CD4-positive, alpha-beta T cell (primary cell): ENCODE measurements at regions of chr2 and their contacts with region 1.

Region 1: GRCh38 chr2:176001916-176002687 is at the start of gene LNPK:
- DNase-seq: peak; percentile 83 to 95 (median 90)
- ATAC-seq: peak; percentile 90
- H3K4me3 ChIP-seq: peak within 1 kb of the TSS; percentile 81
- H3K4me3 Mint-ChIP-seq: peak within 1 kb of the TSS; percentile 88
- H3K27ac ChIP-seq: peak within 1 kb of the TSS; percentile 64 to 69
- H3K27ac Mint-ChIP-seq: peak within 1 kb of the TSS; percentile 84
- H3K4me1 ChIP-seq: peaks cover 16% of the 10 kb centered on the region
- H3K4me1 Mint-ChIP-seq: peaks cover 24% of the 10 kb centered on the region
- H3K27me3 ChIP-seq: no peaks in the 10 kb centered on the region
- H3K27me3 Mint-ChIP-seq: no peaks in the 10 kb centered on the region
- CTCF ChIP-seq: no peak
- total RNA-seq, gene LNPK: 12.7 to 15.8 TPM

Region 2: GRCh38 chr2:174240097-174240496 is 1762.0 kb before region 1 on chr2:
- CTCF ChIA-PET with region 1: no interaction called
- POLR2A ChIA-PET with region 1: no interaction called
- intact Hi-C with region 1: loop called in 1 of 2 experiments (anchors 5 kb)
- DNase-seq: no peak
- ATAC-seq: no peak
- H3K4me3 ChIP-seq: no peak overlapping the region
- H3K4me3 Mint-ChIP-seq: no peak overlapping the region
- H3K27ac ChIP-seq: no peak overlapping the region
- H3K27ac Mint-ChIP-seq: no peak overlapping the region
- H3K4me1 ChIP-seq: peaks cover 3% of the 10 kb centered on the region
- H3K4me1 Mint-ChIP-seq: peaks cover 65% of the 10 kb centered on the region
- H3K27me3 ChIP-seq: no peaks in the 10 kb centered on the region
- H3K27me3 Mint-ChIP-seq: no peaks in the 10 kb centered on the region
- CTCF ChIP-seq: no peak

Region 3: DNA sequence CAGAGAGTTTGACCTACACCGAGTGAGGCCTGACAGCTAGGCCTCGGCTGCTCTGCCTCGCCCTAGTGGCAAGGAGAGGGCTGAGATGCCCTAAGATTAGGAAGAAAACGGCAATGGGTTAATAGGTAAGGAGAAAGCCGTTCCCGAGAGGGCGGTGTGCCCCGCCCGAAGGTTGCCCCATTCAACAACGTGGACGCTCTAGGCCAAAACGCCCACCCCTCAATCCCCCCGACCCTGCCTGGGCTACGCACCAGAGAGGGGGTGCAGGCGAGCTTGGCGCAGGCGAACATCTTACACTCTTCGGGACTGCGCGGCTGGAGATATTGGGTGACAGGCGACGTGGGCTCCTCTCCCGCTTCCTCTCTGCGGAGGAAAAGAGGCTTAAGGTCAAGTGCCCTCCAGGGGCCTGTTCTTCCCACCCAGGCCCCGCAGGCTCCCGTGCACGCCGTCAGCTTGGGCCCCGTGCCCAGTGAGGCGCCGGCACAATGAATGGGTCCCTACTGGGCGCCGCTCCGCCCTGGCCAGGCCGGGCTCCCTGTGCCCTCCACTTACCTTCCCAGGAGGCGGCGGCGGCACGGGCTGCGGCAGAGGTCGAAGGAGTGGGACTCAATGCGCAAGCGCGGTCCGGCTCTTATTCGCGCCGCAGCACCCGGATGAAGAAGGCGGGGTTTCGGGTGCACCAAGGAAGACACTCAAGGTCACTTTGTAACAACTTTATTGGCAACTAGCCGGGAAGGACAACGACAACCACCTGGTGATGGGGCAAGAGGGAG is 820.8 kb before region 1 on chr2 and contains the start of gene ATP5MC3:
- CTCF ChIA-PET with region 1: no interaction called
- POLR2A ChIA-PET with region 1: no interaction called
- intact Hi-C with region 1: loop called in 1 of 2 experiments (anchors 10 kb)
- DNase-seq: peak; percentile 85 to 98 (median 89)
- ATAC-seq: peak; percentile 88
- H3K4me3 ChIP-seq: peak within 1 kb of the TSS; percentile 73
- H3K4me3 Mint-ChIP-seq: peak within 1 kb of the TSS; percentile 96
- H3K27ac ChIP-seq: peak within 1 kb of the TSS; percentile 49 to 75
- H3K27ac Mint-ChIP-seq: peak within 1 kb of the TSS; percentile 84
- H3K4me1 ChIP-seq: peaks cover 16% of the 10 kb centered on the region
- H3K4me1 Mint-ChIP-seq: peaks cover 41% of the 10 kb centered on the region
- H3K27me3 ChIP-seq: no peaks in the 10 kb centered on the region
- H3K27me3 Mint-ChIP-seq: no peaks in the 10 kb centered on the region
- CTCF ChIP-seq: no peak
- total RNA-seq, gene ATP5MC3: 79.5 to 81.6 TPM

Region 4: DNA sequence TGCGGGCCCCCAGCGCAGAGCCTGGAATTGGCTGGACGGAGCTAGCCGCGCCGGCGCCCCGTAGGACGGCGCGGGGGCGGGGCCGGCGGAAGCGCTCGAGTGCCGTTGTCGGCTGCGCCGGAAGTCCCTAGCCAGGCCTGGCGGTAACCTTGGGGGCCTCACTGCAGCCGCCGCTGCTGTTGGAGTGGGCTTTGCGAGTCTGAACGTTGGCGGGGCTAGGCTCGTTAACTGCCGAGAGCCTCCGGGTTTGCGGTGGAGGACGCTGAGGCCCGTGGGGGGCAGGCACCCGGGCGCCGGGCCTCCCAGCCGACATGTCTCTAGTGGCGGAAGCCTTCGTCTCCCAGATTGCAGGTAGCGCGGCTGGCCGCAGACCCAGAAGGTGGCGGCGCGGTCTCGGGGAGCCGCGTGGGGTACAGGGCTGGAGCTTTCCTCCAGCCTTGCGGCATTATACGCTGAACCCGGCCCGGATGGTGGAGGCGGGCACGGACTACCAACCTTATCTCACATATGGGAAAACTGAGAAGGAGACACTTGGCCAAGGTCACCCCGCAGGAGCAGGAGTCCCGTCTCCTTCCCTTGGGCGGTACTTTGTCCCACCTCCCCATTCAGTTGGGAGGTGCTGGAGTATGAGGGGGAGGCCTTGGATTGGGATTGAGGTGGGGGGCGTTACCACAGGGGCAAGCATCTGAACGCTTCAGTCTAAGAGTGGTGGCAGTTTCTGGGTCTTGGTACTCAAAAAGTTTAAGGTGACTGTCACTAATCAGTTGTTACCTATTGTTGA is 267.4 kb after region 1 on chr2 and contains the start of gene MTX2:
- CTCF ChIA-PET with region 1: no interaction called
- POLR2A ChIA-PET with region 1: no interaction called
- intact Hi-C with region 1: loop called in 1 of 2 experiments (anchors 5 kb)
- DNase-seq: peak; percentile 32 to 81 (median 62)
- ATAC-seq: peak; percentile 87
- H3K4me3 ChIP-seq: peak within 1 kb of the TSS; percentile 94
- H3K4me3 Mint-ChIP-seq: peak within 1 kb of the TSS; percentile 98
- H3K27ac ChIP-seq: peak within 1 kb of the TSS; percentile 56 to 68
- H3K27ac Mint-ChIP-seq: peak within 1 kb of the TSS; percentile 82
- H3K4me1 ChIP-seq: peaks cover 6% of the 10 kb centered on the region
- H3K4me1 Mint-ChIP-seq: peaks cover 49% of the 10 kb centered on the region
- H3K27me3 ChIP-seq: peaks cover 0 to 7% of the 10 kb centered on the region in 2 experiments
- H3K27me3 Mint-ChIP-seq: peaks cover 6% of the 10 kb centered on the region
- CTCF ChIP-seq: no peak
- total RNA-seq, gene MTX2: 5.0 to 5.2 TPM

Region 5: GRCh38 chr2:177552422-177553175 is 1550.5 kb after region 1 on chr2:
- CTCF ChIA-PET with region 1: no interaction called
- POLR2A ChIA-PET with region 1: no interaction called
- intact Hi-C with region 1: loop called in 1 of 2 experiments (anchors 10 kb)
- DNase-seq: peak; percentile 80 to 97 (median 88)
- ATAC-seq: peak; percentile 91
- H3K4me3 ChIP-seq: peak overlapping the region; percentile 71
- H3K4me3 Mint-ChIP-seq: peak overlapping the region; percentile 99
- H3K27ac ChIP-seq: peak overlapping the region; percentile 93 to 99
- H3K27ac Mint-ChIP-seq: peak overlapping the region; percentile 98
- H3K4me1 ChIP-seq: peaks cover 13% of the 10 kb centered on the region
- H3K4me1 Mint-ChIP-seq: peaks cover 17% of the 10 kb centered on the region
- H3K27me3 ChIP-seq: no peaks in the 10 kb centered on the region
- H3K27me3 Mint-ChIP-seq: peaks cover 3% of the 10 kb centered on the region
- CTCF ChIP-seq: no peak

Region 6: GRCh38 chr2:177618255-177619253 is 1616.5 kb after region 1 on chr2:
- CTCF ChIA-PET with region 1: no interaction called
- POLR2A ChIA-PET with region 1: no interaction called
- intact Hi-C with region 1: loop called in 1 of 2 experiments (anchors 5 kb)
- DNase-seq: peak; percentile 83 to 96 (median 89)
- ATAC-seq: peak; percentile 89
- H3K4me3 ChIP-seq: peak overlapping the region; percentile 72
- H3K4me3 Mint-ChIP-seq: peak overlapping the region; percentile 96
- H3K27ac ChIP-seq: peak overlapping the region; percentile 89 to 98
- H3K27ac Mint-ChIP-seq: peak overlapping the region; percentile 94
- H3K4me1 ChIP-seq: peaks cover 14% of the 10 kb centered on the region
- H3K4me1 Mint-ChIP-seq: peaks cover 8% of the 10 kb centered on the region
- H3K27me3 ChIP-seq: no peaks in the 10 kb centered on the region
- H3K27me3 Mint-ChIP-seq: peaks cover 12% of the 10 kb centered on the region
- CTCF ChIP-seq: no peak